ENCODE measurements at regions of chr7 and their contacts with region 1.

Region 1: DNA sequence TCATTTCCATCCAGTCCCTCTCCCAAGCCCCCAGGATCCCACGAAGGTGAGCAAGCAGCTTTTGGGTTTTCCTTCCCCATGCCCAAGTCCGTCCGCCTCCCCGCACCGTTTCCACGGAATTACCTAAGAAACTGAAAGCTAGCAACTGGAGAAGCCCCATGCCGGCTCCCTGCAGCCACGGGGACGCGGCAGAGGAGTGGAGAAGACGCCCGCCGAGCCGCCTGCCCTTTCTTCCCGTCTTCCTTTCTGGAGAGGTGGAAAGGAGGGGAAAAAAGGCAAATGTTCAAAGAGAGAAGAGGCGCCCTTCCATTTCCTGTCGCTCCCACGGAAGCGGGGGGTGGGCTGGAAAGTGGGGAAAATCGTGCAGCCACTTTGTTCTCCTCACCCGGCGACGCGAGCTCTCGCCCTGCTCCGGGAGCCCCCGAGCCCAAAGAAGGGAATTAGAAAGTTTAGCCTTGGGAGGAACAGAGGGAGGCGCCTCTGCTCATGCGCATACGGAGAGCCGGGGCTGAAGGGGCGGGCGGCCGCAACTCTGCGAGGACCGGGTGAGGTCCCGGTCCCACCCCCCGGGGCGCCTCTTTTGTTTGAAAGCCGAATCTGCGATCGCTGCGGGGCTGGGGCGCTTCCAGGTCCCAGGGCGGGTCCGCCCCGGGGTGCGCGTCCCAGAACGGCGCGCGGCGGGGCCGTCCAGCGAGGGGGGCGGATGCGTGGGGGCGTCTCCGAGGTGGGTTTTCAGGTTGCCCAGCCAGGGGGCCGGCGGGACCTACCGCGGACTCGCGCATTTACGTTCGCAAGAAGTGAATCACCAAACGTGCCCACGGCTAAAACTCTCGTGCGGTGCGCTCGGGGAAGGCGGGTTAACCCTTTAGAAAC is at the start of gene LAMB1:
- DNase-seq: no peak
- H3K4me3 Mint-ChIP-seq: peak within 1 kb of the TSS; percentile 73
- H3K27ac Mint-ChIP-seq: no peak within 1 kb of the TSS
- H3K4me1 Mint-ChIP-seq: peaks cover 13% of the 10 kb centered on the region
- H3K27me3 Mint-ChIP-seq: peaks cover 66% of the 10 kb centered on the region
- total RNA-seq, gene LAMB1: 0.34 and 0.41 TPM in 2 replicates

Region 2: DNA sequence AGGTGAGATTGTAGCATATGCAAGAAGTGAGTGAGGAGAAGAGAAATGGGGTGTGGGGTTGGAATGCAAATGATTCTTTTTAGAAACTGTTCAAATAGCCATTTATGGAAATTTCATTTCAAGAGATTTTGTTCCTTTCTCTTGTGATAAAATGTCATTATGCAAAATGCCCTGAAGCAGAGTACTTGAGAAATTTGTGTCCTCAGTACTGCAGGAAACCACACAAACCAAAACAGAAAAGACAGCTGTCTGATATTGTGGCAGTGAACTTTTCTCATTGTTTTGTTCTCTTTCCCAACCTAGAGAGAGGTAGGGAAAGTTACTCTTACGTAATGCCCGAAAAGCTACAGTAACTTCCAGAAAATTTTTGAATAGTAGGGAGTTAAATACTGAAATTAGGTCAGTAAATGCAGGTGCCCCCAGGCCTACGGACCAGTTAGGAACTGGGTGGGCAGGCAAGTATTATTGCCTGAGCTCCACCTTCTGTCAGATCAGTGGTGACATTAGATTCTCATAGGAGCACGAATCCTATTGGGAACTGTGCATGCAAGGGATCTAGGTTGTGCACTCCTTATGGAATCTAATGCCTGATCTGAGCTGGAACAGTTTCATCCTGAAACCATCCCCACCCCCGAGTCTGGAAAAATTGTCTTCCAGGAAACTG is 78.0 kb before region 1 on chr7:
- intact Hi-C with region 1: loop called (anchors 10 kb)
- DNase-seq: no peak
- H3K4me3 Mint-ChIP-seq: no peak overlapping the region
- H3K27ac Mint-ChIP-seq: no peak overlapping the region
- H3K4me1 Mint-ChIP-seq: peaks cover 37% of the 10 kb centered on the region
- H3K27me3 Mint-ChIP-seq: no peaks in the 10 kb centered on the region

Measured in activated T-helper 2 cell treated with anti-CD3 and anti-CD28 coated beads, Interferon-gamma antibody, Interleukin-2, Interleukin-4, amounts not matched to agents 10 μg/mL and 5 μg/mL and 100 μg/mL, durations not matched to agents 14 hours and 24 hours and 36 hours (primary cell).